Thyroid gland (tissue), 4 donors: ENCODE measurements at regions of chr10 and their contacts with region 1.

Region 1: GRCh38 chr10:58291538-58292174 is 22.7 kb downstream of the CISD1 start:
- DNase-seq: peak in 1 of 2 donors; percentile 6
- H3K4me3 ChIP-seq: no peak overlapping the region
- H3K27ac ChIP-seq: no peak overlapping the region
- H3K4me1 ChIP-seq: no peaks in the 10 kb centered on the region
- H3K27me3 ChIP-seq: no peaks in the 10 kb centered on the region
- CTCF ChIP-seq: peak in 5 of 6 experiments; percentile 14 to 69 (median 55)
- POLR2A ChIP-seq: no peak

Region 2: GRCh38 chr10:58180666-58181065 is 111.0 kb before region 1 on chr10:
- intact Hi-C with region 1: loop called (anchors 5 kb)
- DNase-seq: no peak
- H3K4me3 ChIP-seq: no peak overlapping the region
- H3K27ac ChIP-seq: no peak overlapping the region
- H3K4me1 ChIP-seq: no peaks in the 10 kb centered on the region
- H3K27me3 ChIP-seq: no peaks in the 10 kb centered on the region
- CTCF ChIP-seq: no peak
- POLR2A ChIP-seq: no peak